Activated CD8-positive, alpha-beta memory T cell treated with anti-CD3 and anti-CD28 coated beads, Interleukin-2, amount 10 ng/mL, durations not matched to agents 7 days and 5 days (primary cell): ENCODE measurements at regions of chr7 and their contacts with region 1.

Region 1: DNA sequence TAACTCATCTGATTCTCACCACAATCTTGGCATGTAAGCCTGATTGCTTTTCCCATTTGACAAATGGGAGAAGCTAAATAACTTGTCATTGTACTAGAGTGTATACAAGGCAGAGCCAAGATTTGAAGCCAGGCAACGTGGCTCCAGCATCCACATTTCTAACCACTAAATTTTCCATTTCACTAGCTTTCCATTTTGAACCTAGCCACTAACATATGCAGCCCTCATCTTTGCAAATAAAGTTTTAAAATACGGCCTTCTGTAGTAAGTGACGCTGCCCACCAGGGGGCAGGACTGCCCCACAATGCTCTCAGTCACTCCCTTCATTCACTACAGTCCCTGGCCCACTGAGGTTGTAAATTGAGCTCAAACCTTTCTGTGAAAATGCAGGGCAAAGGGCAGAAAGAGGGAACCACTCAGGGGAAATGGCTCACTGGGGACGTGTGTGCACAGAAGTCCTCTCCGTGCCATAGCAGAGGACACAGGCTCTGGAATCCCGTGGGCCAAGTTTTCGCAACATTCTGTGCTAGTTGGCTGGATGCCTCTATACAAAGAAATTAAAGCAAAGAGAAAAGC is 315.7 kb downstream of the TNS3 start:
- DNase-seq: peak; percentile 43
- ATAC-seq: no peak
- H3K4me3 Mint-ChIP-seq: no peak overlapping the region
- H3K27ac Mint-ChIP-seq: no peak overlapping the region
- H3K4me1 Mint-ChIP-seq: no peaks in the 10 kb centered on the region
- H3K27me3 Mint-ChIP-seq: no peaks in the 10 kb centered on the region

Region 2: DNA sequence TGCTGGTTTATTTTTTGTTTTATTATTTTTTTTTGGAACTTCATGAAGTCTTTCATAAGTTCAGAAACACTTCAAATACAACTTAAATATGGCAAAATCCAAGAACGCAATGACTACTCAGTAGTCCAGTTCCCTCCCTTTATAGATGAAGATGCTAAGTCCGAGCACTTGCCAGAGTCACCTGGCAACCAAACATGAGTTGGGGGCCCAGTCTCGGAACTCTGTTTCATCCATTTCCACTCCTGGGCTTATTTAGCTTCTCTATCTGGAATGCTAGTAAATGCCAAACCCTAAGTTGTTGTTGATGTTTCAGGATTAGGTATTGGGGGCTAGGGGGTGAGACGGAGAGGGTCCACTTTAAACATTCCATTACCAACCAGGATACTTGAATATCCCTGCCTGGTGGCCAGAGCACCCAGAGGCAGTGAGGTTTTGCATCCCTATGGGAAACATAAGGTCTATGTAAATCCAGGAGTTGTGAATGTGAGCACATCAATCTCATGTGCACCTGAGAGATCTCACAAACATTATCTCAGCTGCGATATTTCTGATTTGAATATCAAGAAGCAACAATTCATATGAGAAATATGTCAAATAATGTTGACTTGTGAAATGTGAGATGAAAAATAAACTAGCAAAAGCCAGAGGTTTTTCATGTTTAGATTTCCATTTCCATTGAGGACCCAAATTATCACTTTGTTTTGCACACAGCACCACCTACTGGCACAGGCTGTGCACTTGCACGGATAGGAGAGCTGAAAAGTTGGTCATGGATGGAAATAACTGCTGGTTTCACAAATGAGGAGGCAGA is 552.8 kb after region 1 on chr7:
- CTCF ChIA-PET with region 1: interaction called, 12 read pairs
- DNase-seq: peak; percentile 59
- ATAC-seq: no peak
- H3K4me3 Mint-ChIP-seq: no peak overlapping the region
- H3K27ac Mint-ChIP-seq: no peak overlapping the region
- H3K4me1 Mint-ChIP-seq: no peaks in the 10 kb centered on the region
- H3K27me3 Mint-ChIP-seq: peaks cover 4% of the 10 kb centered on the region